Mucosa of descending colon (tissue), 3 donors: ENCODE measurements at regions of chr3 and their contacts with region 1.

Region 1: DNA sequence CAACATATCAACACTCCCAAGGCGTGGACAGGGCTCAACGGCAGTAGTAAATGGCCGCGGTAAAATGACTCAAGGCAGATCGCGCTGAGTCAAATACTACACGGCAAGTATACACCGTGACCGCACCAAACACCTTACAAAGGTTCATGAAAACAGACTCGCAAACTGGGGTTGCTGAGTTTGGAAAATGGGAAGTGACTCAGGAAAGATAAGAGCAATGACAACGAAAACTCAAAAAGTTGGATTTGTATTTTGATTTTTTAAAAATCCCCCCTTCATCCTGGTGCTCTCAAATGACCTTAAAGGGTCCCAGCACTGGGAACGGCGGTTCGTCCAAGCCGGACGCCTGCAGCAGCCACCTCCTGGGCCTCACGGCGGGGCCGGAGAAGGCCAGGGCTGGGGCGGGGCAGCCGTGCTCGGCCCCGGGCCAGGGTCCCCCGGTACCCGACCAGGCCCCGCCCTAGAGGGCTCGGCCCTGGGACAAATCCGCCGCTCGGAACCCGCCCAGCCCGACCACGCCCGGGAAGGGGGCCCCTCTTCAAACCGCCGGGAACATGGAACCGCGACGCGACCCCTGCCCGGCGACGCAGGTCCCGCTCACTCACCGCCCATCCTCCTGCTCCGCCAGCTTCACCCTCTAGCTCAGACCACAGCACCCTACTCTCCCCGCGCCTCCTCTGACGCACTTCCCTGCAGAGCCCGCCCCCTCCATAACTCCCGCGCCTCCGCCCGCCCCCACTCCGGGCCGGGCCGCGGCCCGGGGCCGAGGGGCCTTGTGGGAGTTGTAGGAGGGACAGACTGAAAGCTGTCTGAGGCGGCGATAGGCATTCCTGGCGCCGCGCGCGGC is at the start of gene CLDND1:
- DNase-seq: peak; percentile 99
- ATAC-seq: peak; percentile 98
- H3K4me3 ChIP-seq: peak within 1 kb of the TSS; percentile 69
- H3K4me1 ChIP-seq: peaks cover 3% of the 10 kb centered on the region
- CTCF ChIP-seq: no peak
- total RNA-seq, gene CLDND1: 64.6 to 150 (median 70.4) TPM

Region 2: GRCh38 chr3:97764407-97765238 is 757.8 kb before region 1 on chr3 and contains the start of gene ARL6:
- intact Hi-C with region 1: loop called in 1 of 2 experiments (anchors 10 kb)
- DNase-seq: peak; percentile 86 to 89 (median 87)
- ATAC-seq: peak; percentile 99
- H3K4me3 ChIP-seq: peak within 1 kb of the TSS; percentile 47
- H3K4me1 ChIP-seq: peaks cover 6% of the 10 kb centered on the region
- CTCF ChIP-seq: no peak
- total RNA-seq, gene ARL6: 2.2 to 6.5 (median 3.7) TPM

Region 3: DNA sequence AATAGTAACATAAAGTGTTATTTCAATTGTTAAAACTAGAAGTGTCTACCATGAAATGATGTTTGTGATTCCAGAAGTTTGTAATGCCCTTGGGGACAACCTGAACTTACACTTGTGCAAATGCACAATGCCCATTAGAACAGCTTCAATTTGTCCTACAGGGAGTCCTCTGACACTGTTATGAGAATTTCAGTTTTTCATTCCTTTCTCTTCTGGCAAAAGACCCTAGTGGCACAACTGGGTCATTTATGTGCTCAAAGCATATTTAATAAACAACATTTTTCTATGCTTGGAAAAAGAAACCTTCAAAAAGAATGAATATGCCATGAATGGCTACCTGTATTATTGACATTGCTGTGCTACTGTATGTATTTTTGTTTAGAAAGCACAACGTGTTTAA is 392.0 kb before region 1 on chr3 and contains the start of gene OR5H1:
- intact Hi-C with region 1: no loop called
- DNase-seq: no peak
- ATAC-seq: no peak
- H3K4me3 ChIP-seq: no peak within 1 kb of the TSS
- H3K4me1 ChIP-seq: no peaks in the 10 kb centered on the region
- CTCF ChIP-seq: no peak
- total RNA-seq, gene OR5H1: not detected

Region 4: GRCh38 chr3:98343647-98344507 is 178.6 kb before region 1 on chr3:
- intact Hi-C with region 1: no loop called
- DNase-seq: peak in 1 of 3 donors; percentile 73
- ATAC-seq: peak; percentile 40
- H3K4me3 ChIP-seq: no peak overlapping the region
- H3K4me1 ChIP-seq: no peaks in the 10 kb centered on the region
- CTCF ChIP-seq: no peak

Region 5: GRCh38 chr3:98596541-98597500 is 74.4 kb after region 1 on chr3:
- intact Hi-C with region 1: loop called in 1 of 2 experiments (anchors 5 kb)
- DNase-seq: peak in 1 of 3 donors; percentile 40
- ATAC-seq: no peak
- H3K4me3 ChIP-seq: no peak overlapping the region
- H3K4me1 ChIP-seq: peaks cover 9% of the 10 kb centered on the region
- CTCF ChIP-seq: no peak

Region 6: DNA sequence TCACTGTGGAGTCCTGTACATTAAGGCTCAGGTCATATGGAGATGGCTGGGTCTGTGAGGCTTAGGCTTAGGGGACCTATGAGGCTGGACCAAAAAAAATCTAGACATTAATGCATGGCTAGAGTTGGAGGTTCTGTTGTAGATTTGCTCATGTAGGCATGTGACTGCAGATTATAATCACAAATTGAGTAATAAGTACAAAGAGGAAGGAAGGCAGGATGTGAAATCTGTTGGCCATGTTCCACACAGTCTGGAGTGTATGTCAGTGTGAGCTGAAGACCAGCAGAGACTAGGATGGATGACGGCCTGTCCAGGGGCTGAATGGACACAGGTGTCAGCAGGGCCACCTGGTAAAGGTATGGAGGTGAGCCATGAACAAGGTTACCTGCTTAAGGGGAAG is 240.6 kb after region 1 on chr3 and contains the start of gene ST3GAL6:
- intact Hi-C with region 1: no loop called
- DNase-seq: peak in 1 of 3 donors; percentile 46
- ATAC-seq: peak; percentile 60
- H3K4me3 ChIP-seq: no peak within 1 kb of the TSS
- H3K4me1 ChIP-seq: no peaks in the 10 kb centered on the region
- CTCF ChIP-seq: no peak
- total RNA-seq, gene ST3GAL6: 1.4 to 10.9 (median 2.3) TPM